Naive thymus-derived CD4-positive, alpha-beta T cell (primary cell): ENCODE measurements at regions of chr11 and their contacts with region 1.

Region 1: DNA sequence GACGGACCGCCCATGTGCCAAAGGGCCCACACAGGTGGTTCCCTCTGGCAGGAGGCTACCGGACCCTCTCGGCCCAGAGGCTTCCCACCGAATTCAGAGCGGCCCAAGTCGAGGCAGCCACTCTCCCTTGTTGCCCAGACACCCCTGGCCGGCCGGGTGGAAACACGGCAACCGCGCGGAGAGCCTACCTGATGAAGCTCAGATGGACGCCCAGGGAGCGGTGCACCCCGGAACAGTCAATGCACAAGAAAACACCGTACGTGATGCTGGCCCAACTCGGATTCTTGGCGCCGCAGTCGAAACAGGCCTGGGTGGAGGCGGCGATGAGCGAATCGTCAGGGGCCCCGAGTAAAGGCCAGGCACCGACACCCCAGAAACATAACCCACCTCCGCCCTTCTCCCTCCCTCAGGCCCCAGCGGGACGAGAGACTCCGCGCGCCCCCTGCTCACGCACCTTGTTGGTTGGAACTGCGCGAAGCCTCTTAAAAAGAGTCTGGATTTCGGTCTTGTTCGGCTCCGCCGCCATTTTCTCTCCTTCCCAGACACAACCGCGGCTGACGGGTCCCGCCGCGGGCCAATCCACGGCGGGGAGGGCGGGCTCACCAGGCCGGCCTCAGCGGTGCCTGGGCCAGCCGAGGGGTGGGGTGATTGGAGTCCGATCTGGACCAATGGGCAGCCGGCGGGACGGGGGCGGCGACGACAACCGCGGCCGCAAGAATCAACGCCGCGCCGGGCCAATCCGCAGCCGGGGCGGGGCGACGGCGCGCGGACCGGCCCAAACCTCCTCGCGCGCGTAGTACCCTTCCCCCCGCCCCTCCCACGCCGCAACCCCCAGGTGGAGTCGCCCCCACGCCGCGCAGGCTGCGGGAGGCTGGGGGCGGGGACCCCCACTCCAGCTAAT is at the start of gene ARFGAP2:
- DNase-seq: peak; percentile 92 to 98 (median 96)
- ATAC-seq: peak; percentile 94
- H3K4me3 ChIP-seq: peak within 1 kb of the TSS; percentile 97
- H3K4me3 Mint-ChIP-seq: peak within 1 kb of the TSS; percentile 92 to 99 (median 98)
- H3K27ac ChIP-seq: peak within 1 kb of the TSS; percentile 97
- H3K27ac Mint-ChIP-seq: peak within 1 kb of the TSS; percentile 97 to 100 (median 99)
- H3K4me1 ChIP-seq: peaks cover 19 to 31% of the 10 kb centered on the region in 2 donors
- H3K4me1 Mint-ChIP-seq: peaks cover 19 to 60% (median 45%) of the 10 kb centered on the region in 7 donors
- H3K27me3 ChIP-seq: no peaks in the 10 kb centered on the region
- H3K27me3 Mint-ChIP-seq: no peaks in the 10 kb centered on the region
- total RNA-seq, gene ARFGAP2: 107 to 220 (median 155) TPM

Region 2: DNA sequence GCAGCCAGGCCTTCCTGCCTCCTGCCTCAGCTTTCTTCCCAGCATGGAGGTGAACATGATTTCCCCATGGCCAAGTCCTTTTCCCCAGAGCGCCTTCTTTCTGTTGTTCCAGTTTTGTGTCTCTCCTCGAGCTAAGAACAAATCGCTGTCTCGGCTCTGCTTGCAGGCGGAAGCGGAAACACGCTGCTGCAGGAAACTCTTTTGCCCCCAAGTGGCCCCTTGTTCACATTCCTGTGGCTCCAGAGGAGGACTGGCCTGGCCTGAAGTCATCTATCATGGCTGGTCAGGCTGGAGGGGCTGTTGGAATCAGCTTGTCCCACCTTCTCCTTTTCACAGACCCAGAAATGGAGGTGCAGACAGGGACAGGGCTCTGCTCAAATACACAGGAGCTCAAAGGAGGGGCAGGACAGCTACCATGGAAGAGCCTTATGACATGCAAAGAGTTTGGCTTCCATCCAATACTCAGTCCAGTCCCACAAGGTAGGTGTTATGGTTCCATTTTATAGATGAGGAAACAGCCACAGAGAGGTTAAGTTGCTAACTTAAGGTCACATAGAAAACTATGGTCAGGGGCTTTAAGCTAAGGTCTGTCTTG is 1708.2 kb before region 1 on chr11:
- CTCF ChIA-PET with region 1: no interaction called
- POLR2A ChIA-PET with region 1: no interaction called
- intact Hi-C with region 1: no loop called
- DNase-seq: no peak
- ATAC-seq: no peak
- H3K4me3 ChIP-seq: no peak overlapping the region
- H3K4me3 Mint-ChIP-seq: no peak overlapping the region
- H3K27ac ChIP-seq: no peak overlapping the region
- H3K27ac Mint-ChIP-seq: no peak overlapping the region
- H3K4me1 ChIP-seq: no peaks in the 10 kb centered on the region
- H3K4me1 Mint-ChIP-seq: no peaks in the 10 kb centered on the region
- H3K27me3 ChIP-seq: no peaks in the 10 kb centered on the region
- H3K27me3 Mint-ChIP-seq: peaks cover 0 to 7% (median 2%) of the 10 kb centered on the region in 5 donors

Region 3: DNA sequence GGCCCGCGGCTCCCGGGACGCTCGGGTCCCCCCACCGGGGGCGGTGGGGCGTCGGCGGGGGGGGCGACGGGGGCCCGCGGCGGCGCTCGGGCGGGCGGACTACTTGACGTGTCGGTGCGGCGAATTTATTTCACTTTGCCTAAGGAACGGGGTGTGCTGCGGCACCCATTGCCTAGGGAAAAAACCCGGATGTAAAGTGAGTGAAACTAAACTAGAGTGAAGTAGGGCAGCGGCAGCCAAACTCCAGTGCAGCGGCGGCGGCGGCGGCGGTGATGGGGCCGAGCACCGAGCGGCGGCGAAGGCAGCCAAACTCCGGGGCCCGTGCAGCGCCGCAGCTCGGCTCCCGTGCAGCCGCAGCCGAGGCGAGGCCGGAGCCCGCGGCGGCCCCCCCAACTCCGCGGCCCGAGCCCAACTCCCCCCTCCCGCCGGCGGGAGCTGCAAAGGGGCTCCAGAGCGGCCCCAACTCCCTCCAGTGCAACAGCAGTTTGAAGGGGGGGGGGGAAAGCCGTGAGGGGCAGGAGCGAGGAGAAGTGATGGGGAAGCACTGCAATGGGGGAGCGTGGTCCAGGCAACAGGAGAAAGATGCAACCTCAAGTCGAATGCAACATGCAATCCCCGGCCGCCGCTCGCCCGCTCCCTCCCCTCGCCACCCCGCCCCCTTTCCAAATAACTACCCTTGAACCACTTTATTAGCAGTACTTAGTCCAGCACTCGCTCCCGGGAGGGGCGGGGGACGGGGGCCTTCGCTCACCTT is 1054.7 kb before region 1 on chr11:
- CTCF ChIA-PET with region 1: no interaction called
- POLR2A ChIA-PET with region 1: no interaction called
- intact Hi-C with region 1: loop called in 1 of 2 experiments (anchors 10 kb)
- DNase-seq: peak in 7 of 9 donors; percentile 20 to 85 (median 80)
- ATAC-seq: peak; percentile 69
- H3K4me3 ChIP-seq: peak overlapping the region; percentile 53
- H3K4me3 Mint-ChIP-seq: peak overlapping the region; percentile 83 to 95 (median 93)
- H3K27ac ChIP-seq: peak overlapping the region; percentile 80
- H3K27ac Mint-ChIP-seq: peak overlapping the region; percentile 87 to 98 (median 95)
- H3K4me1 ChIP-seq: peaks cover 18 to 22% of the 10 kb centered on the region in 2 donors
- H3K4me1 Mint-ChIP-seq: peaks cover 24 to 39% (median 35%) of the 10 kb centered on the region in 7 donors
- H3K27me3 ChIP-seq: no peaks in the 10 kb centered on the region
- H3K27me3 Mint-ChIP-seq: no peaks in the 10 kb centered on the region

Region 4: DNA sequence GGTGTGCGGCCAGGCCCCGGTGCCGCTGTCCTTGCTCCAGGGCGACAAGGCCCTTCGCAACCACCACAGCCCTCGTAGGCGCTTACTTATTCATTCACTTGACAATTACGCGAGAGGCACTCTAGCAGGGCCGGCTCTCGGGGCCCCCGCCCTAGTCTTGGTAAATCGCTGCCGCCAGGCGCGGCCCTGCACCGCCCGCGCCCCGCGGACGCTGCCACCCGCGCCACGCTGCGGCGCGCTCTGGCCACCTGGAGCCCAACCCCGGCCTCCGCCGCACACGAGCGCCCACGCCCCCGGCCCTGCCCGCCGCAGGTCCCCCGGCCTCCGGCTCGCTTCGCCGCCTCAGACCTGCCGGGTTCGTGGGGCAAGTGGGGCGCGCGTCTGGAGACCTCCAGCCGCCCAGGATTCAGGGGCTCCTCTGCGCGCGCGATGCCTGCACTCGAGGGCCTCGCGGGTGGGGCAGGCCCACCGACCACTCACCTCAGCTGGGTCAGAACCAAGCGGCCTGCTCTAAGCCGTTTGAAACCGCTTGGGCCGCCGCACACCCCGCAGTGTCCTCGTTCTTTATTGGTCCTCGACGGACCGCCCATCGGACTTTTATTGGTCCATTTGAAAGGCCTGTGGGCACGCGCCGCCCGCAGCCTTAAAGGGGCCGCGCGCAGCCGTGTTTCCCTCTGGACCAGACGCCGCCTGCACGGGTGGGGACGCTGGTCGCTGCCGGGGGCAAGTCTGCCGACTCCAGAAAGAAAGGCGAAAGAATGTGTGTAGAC is 330.7 kb before region 1 on chr11 and contains the start of gene CKAP5:
- CTCF ChIA-PET with region 1: no interaction called
- POLR2A ChIA-PET with region 1: no interaction called
- intact Hi-C with region 1: loop called in 1 of 2 experiments (anchors 1 kb)
- DNase-seq: peak; percentile 63 to 89 (median 80)
- ATAC-seq: peak; percentile 96
- H3K4me3 ChIP-seq: peak within 1 kb of the TSS; percentile 71
- H3K4me3 Mint-ChIP-seq: peak within 1 kb of the TSS; percentile 85 to 99 (median 97)
- H3K27ac ChIP-seq: peak within 1 kb of the TSS; percentile 71
- H3K27ac Mint-ChIP-seq: peak within 1 kb of the TSS; percentile 88 to 97 (median 93)
- H3K4me1 ChIP-seq: peaks cover 0 to 14% of the 10 kb centered on the region in 2 donors
- H3K4me1 Mint-ChIP-seq: peaks cover 33 to 50% (median 43%) of the 10 kb centered on the region in 7 donors
- H3K27me3 ChIP-seq: no peaks in the 10 kb centered on the region
- H3K27me3 Mint-ChIP-seq: no peaks in the 10 kb centered on the region
- total RNA-seq, gene CKAP5: 28.3 to 126 (median 46.0) TPM

Region 5: DNA sequence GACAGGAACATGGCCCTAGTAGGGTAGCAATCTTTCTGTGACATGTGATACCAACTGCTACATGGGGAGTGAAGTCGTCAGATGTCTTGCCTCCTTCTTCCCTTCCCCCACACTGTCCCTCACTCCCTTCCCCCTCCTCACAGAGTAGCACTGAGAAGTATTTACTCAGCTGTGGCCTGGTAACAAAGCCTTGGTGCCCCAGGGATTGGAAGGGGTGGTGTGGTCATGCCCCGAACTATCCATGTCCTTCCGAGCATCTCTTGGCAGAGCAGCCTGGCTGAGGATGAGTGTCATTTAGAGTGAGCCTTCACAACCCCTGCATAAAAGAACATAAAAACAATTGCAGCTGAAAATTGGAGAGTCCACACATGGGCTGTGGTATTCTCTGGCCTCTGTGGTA is 46.0 kb before region 1 on chr11:
- CTCF ChIA-PET with region 1: no interaction called
- POLR2A ChIA-PET with region 1: no interaction called
- intact Hi-C with region 1: no loop called
- DNase-seq: no peak
- ATAC-seq: no peak
- H3K4me3 ChIP-seq: no peak overlapping the region
- H3K4me3 Mint-ChIP-seq: no peak overlapping the region
- H3K27ac ChIP-seq: no peak overlapping the region
- H3K27ac Mint-ChIP-seq: no peak overlapping the region
- H3K4me1 ChIP-seq: no peaks in the 10 kb centered on the region
- H3K4me1 Mint-ChIP-seq: peaks cover 0 to 2% (median 0%) of the 10 kb centered on the region in 7 donors
- H3K27me3 ChIP-seq: no peaks in the 10 kb centered on the region
- H3K27me3 Mint-ChIP-seq: peaks cover 0 to 2% (median 0%) of the 10 kb centered on the region in 5 donors

Region 6: GRCh38 chr11:47143322-47143721 is 33.3 kb before region 1 on chr11:
- CTCF ChIA-PET with region 1: no interaction called
- POLR2A ChIA-PET with region 1: no interaction called
- intact Hi-C with region 1: no loop called
- DNase-seq: no peak
- ATAC-seq: no peak
- H3K4me3 ChIP-seq: no peak overlapping the region
- H3K4me3 Mint-ChIP-seq: no peak overlapping the region
- H3K27ac ChIP-seq: no peak overlapping the region
- H3K27ac Mint-ChIP-seq: peak overlapping the region in 1 of 9 donors; percentile 3
- H3K4me1 ChIP-seq: no peaks in the 10 kb centered on the region
- H3K4me1 Mint-ChIP-seq: peaks cover 0 to 4% (median 0%) of the 10 kb centered on the region in 7 donors
- H3K27me3 ChIP-seq: no peaks in the 10 kb centered on the region
- H3K27me3 Mint-ChIP-seq: no peaks in the 10 kb centered on the region

Region 7: DNA sequence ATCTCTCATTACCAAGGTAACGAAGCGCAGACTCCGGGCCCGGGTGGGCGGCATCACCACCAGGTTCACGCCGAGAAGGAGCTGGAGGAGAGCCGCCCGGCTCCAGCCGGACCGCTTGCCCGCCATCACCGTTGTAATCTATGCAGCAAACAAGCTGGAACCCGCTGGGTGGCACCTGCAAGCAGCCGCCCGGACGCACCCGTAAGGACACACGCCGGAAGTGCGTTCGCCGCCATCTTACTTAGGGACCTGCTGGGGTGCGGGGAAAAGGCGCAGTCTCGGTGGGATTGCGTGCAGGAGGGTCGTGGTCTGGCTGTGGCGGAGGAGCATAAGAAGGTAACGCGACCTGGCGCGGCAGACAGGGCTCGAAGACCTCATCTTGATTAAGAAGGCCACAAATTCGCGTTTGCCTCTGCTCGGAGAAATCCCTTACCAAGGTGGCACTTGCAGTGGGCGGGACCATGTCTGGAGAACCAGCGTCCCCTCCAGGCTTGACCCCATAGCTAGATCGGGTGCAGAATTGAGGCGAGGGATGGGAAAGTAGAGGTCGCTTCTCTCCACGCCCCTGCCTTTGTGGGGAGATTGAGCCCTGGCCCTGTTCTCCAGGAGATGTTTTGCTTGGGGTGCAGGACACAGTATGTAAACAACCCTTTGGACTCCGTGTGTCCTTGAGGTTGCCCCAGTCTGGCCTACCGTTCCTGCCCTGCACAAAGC is 72.2 kb after region 1 on chr11 and contains the start of gene ACP2:
- CTCF ChIA-PET with region 1: interaction called, 4 read pairs
- POLR2A ChIA-PET with region 1: interaction called, 12 read pairs
- intact Hi-C with region 1: loop called (anchors 1 kb)
- DNase-seq: peak; percentile 83 to 91 (median 86)
- ATAC-seq: peak; percentile 99
- H3K4me3 ChIP-seq: peak within 1 kb of the TSS; percentile 93
- H3K4me3 Mint-ChIP-seq: peak within 1 kb of the TSS; percentile 93 to 100 (median 98)
- H3K27ac ChIP-seq: peak within 1 kb of the TSS; percentile 87
- H3K27ac Mint-ChIP-seq: peak within 1 kb of the TSS; percentile 94 to 100 (median 98)
- H3K4me1 ChIP-seq: peaks cover 11 to 15% of the 10 kb centered on the region in 2 donors
- H3K4me1 Mint-ChIP-seq: peaks cover 13 to 39% (median 29%) of the 10 kb centered on the region in 7 donors
- H3K27me3 ChIP-seq: no peaks in the 10 kb centered on the region
- H3K27me3 Mint-ChIP-seq: no peaks in the 10 kb centered on the region
- total RNA-seq, gene ACP2: 17.6 to 38.1 (median 24.3) TPM

Region 8: GRCh38 chr11:47407746-47408590 is 231.4 kb after region 1 on chr11 and contains the start of gene SLC39A13:
- CTCF ChIA-PET with region 1: interaction called, 4 read pairs
- POLR2A ChIA-PET with region 1: no interaction called
- intact Hi-C with region 1: loop called (anchors 1 to 5 kb)
- DNase-seq: peak; percentile 80 to 99 (median 88)
- ATAC-seq: peak; percentile 91
- H3K4me3 ChIP-seq: peak within 1 kb of the TSS; percentile 71
- H3K4me3 Mint-ChIP-seq: peak within 1 kb of the TSS; percentile 87 to 99 (median 91)
- H3K27ac ChIP-seq: peak within 1 kb of the TSS; percentile 83
- H3K27ac Mint-ChIP-seq: peak within 1 kb of the TSS; percentile 90 to 98 (median 94)
- H3K4me1 ChIP-seq: peaks cover 8 to 13% of the 10 kb centered on the region in 2 donors
- H3K4me1 Mint-ChIP-seq: peaks cover 4 to 23% (median 21%) of the 10 kb centered on the region in 7 donors
- H3K27me3 ChIP-seq: no peaks in the 10 kb centered on the region
- H3K27me3 Mint-ChIP-seq: no peaks in the 10 kb centered on the region
- total RNA-seq, gene SLC39A13: 29.9 to 60.4 (median 45.1) TPM

Region 9: DNA sequence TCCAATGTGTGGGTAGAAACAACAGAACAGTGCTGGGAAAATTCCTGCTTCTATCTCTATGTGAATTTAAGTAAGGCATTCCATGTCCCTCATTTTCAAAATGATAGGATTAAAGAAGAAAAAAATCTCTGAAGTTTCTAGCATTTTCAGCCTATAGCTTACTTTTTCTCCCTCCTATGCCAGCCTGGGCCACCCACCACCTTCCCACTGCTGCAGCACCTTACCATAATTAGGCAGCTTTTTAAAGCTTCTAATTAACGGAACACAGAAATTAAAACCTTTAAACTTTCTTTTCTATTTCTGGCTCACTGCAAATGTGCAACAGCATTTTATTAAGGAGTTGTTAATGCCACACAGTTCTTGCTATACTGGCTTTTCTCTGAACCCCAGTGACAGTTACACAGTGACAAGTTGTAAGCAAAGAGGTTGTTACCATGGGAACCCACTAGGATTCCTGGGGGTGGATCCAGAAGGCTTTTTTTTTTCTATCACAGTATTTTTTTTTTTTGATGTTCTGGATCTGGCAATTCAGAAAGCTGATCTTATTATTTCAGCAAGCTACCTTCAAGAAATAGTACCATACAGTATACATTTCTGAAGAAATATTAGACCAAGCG is 356.1 kb after region 1 on chr11:
- CTCF ChIA-PET with region 1: no interaction called
- POLR2A ChIA-PET with region 1: no interaction called
- intact Hi-C with region 1: no loop called
- DNase-seq: no peak
- ATAC-seq: no peak
- H3K4me3 ChIP-seq: no peak overlapping the region
- H3K4me3 Mint-ChIP-seq: peak overlapping the region in 4 of 10 donors; percentile 3 to 41 (median 22)
- H3K27ac ChIP-seq: peak overlapping the region; percentile 30
- H3K27ac Mint-ChIP-seq: peak overlapping the region in 7 of 9 donors; percentile 36 to 80 (median 67)
- H3K4me1 ChIP-seq: peaks cover 3 to 16% of the 10 kb centered on the region in 2 donors
- H3K4me1 Mint-ChIP-seq: peaks cover 15 to 73% (median 51%) of the 10 kb centered on the region in 7 donors
- H3K27me3 ChIP-seq: no peaks in the 10 kb centered on the region
- H3K27me3 Mint-ChIP-seq: no peaks in the 10 kb centered on the region

Region 10: GRCh38 chr11:47642099-47642855 is 465.7 kb after region 1 on chr11 and contains the start of gene MTCH2:
- CTCF ChIA-PET with region 1: no interaction called
- POLR2A ChIA-PET with region 1: no interaction called
- intact Hi-C with region 1: loop called in 1 of 2 experiments (anchors 1 kb)
- DNase-seq: peak; percentile 92 to 97 (median 95)
- ATAC-seq: peak; percentile 97
- H3K4me3 ChIP-seq: peak within 1 kb of the TSS; percentile 85
- H3K4me3 Mint-ChIP-seq: peak within 1 kb of the TSS; percentile 92 to 99 (median 96)
- H3K27ac ChIP-seq: peak within 1 kb of the TSS; percentile 83
- H3K27ac Mint-ChIP-seq: peak within 1 kb of the TSS; percentile 94 to 99 (median 97)
- H3K4me1 ChIP-seq: peaks cover 8 to 11% of the 10 kb centered on the region in 2 donors
- H3K4me1 Mint-ChIP-seq: peaks cover 17 to 32% (median 25%) of the 10 kb centered on the region in 7 donors
- H3K27me3 ChIP-seq: no peaks in the 10 kb centered on the region
- H3K27me3 Mint-ChIP-seq: no peaks in the 10 kb centered on the region
- total RNA-seq, gene MTCH2: 19.8 to 88.6 (median 21.1) TPM